PC-3 (cell line): ENCODE measurements at regions of chr18 and their contacts with region 1.

Region 1: GRCh38 chr18:63578357-63578958 is 8.7 kb upstream of the SERPINB13 start:
- DNase-seq: peak; percentile 69
- ATAC-seq: peak; percentile 48; the same call in 1 of the 2 replicates
- H3K4me3 ChIP-seq: no peak overlapping the region
- H3K27ac ChIP-seq: no peak overlapping the region
- H3K4me1 ChIP-seq: no peaks in the 10 kb centered on the region
- H3K27me3 ChIP-seq: no peaks in the 10 kb centered on the region
- CTCF ChIP-seq: peak; percentile 90

Region 2: DNA sequence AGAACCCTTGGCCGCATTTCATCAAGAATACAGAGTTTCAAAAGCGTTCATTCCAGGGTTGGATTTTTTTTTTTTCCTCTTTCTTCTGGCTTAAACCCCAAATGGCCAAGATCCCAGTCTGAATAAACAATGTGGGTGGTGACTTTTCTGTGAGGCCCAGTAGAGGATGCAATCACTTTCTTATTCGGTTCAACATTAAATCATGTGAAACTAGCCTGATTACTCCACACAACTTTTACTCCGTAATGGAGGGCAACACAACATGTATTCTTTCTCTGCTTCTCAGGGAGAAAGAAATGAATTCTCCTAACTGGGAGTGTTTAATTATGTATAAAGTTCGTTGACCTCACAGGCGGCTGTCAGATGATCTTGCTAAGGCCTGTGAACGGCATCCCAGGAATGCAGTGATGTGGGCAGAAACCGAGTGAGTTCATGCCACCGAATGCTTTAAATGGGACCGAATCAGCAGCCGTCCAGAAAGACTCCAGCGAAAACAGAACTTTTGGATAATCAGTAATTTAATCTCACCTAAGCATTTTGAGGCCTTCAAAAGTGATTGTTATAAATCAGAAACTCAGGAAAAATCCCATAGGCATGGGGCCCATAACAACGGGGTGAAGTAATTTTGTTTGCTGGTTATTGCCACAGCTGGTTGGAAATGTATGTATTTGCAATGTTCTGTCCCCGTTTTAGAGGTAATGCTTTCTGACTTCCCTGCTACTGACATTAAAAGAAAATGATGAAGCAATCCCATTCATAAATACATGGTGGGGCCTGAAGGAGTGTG is 340.4 kb before region 1 on chr18:
- CTCF ChIA-PET with region 1: no interaction called
- POLR2A ChIA-PET with region 1: no interaction called
- intact Hi-C with region 1: no loop called
- DNase-seq: peak; percentile 74
- ATAC-seq: peak; percentile 87
- H3K4me3 ChIP-seq: peak overlapping the region; percentile 45
- H3K27ac ChIP-seq: peak overlapping the region; percentile 29
- H3K4me1 ChIP-seq: peaks cover 19% of the 10 kb centered on the region
- H3K27me3 ChIP-seq: no peaks in the 10 kb centered on the region
- CTCF ChIP-seq: no peak

Region 3: GRCh38 chr18:63518178-63519012 is 60.1 kb before region 1 on chr18:
- CTCF ChIA-PET with region 1: interaction called, 10 read pairs
- POLR2A ChIA-PET with region 1: no interaction called
- intact Hi-C with region 1: loop called (anchors 1 kb)
- DNase-seq: peak; percentile 91
- ATAC-seq: peak; percentile 97
- H3K4me3 ChIP-seq: no peak overlapping the region
- H3K27ac ChIP-seq: no peak overlapping the region
- H3K4me1 ChIP-seq: peaks cover 8% of the 10 kb centered on the region; the same call in 1 of the 2 replicates
- H3K27me3 ChIP-seq: no peaks in the 10 kb centered on the region
- CTCF ChIP-seq: peak; percentile 76